ENCODE measurements at regions of chr1 and their contacts with region 1.

Region 1: DNA sequence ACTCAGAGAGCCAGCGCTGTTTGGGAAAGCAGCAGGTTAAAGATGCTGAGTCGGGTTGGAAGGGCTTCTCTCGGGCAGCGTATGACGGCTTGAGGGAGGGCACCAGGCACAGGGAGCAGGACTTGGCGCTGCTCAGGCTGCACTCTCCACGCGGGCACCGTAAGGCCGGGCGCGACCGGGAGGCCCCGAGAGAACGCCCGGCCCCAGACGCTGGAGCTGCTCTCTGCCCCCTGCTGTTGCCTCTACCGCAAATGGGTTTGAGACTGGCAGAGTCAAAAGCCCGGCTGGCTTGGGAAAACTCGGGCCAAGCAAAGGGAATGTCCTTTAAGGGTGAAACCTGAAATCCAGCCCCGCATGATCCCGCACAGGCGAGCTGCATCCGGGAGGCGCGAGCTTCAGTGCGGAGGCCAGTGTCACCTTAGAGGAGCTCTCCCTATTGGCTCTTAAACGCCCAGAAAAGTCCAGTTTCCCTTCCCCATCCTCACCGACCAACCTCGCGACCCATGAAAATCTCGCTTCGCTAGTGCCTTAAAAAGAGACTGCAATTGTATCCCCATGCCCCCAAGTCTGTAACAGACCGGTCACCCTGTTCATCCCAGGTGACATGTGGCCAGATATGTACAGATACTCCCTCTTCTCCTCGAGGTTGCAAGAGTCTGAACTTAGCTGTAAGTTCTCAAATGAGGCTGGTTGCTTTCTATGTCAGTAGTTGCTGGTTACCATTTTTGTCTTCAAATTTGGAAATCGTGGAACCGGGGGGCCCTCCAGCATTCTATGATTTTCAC is 1.1 kb downstream of the PRRX1 start:
- DNase-seq: peak; percentile 80
- H3K4me3 ChIP-seq: peak overlapping the region; percentile 96
- H3K27ac ChIP-seq: peak overlapping the region; percentile 97
- H3K4me1 ChIP-seq: peaks cover 20% of the 10 kb centered on the region
- H3K27me3 ChIP-seq: no peaks in the 10 kb centered on the region

Region 2: GRCh38 chr1:170010443-170010842 is 654.6 kb before region 1 on chr1:
- in situ Hi-C with region 1: loop called (anchors 10 kb)
- DNase-seq: peak; percentile 79
- H3K4me3 ChIP-seq: no peak overlapping the region
- H3K27ac ChIP-seq: no peak overlapping the region
- H3K4me1 ChIP-seq: no peaks in the 10 kb centered on the region
- H3K27me3 ChIP-seq: no peaks in the 10 kb centered on the region

Region 3: GRCh38 chr1:170436928-170437327 is 228.1 kb before region 1 on chr1:
- in situ Hi-C with region 1: no loop called
- DNase-seq: no peak
- H3K4me3 ChIP-seq: no peak overlapping the region
- H3K27ac ChIP-seq: no peak overlapping the region
- H3K4me1 ChIP-seq: no peaks in the 10 kb centered on the region
- H3K27me3 ChIP-seq: no peaks in the 10 kb centered on the region

Region 4: GRCh38 chr1:170531758-170532657 is 133.0 kb before region 1 on chr1 and contains the start of gene GORAB:
- in situ Hi-C with region 1: loop called (anchors 10 kb)
- DNase-seq: peak; percentile 97
- H3K4me3 ChIP-seq: peak within 1 kb of the TSS; percentile 96
- H3K27ac ChIP-seq: peak within 1 kb of the TSS; percentile 100
- H3K4me1 ChIP-seq: peaks cover 19% of the 10 kb centered on the region
- H3K27me3 ChIP-seq: no peaks in the 10 kb centered on the region
- total RNA-seq, gene GORAB: 16.4 and 27.7 TPM in 2 replicates

Region 5: DNA sequence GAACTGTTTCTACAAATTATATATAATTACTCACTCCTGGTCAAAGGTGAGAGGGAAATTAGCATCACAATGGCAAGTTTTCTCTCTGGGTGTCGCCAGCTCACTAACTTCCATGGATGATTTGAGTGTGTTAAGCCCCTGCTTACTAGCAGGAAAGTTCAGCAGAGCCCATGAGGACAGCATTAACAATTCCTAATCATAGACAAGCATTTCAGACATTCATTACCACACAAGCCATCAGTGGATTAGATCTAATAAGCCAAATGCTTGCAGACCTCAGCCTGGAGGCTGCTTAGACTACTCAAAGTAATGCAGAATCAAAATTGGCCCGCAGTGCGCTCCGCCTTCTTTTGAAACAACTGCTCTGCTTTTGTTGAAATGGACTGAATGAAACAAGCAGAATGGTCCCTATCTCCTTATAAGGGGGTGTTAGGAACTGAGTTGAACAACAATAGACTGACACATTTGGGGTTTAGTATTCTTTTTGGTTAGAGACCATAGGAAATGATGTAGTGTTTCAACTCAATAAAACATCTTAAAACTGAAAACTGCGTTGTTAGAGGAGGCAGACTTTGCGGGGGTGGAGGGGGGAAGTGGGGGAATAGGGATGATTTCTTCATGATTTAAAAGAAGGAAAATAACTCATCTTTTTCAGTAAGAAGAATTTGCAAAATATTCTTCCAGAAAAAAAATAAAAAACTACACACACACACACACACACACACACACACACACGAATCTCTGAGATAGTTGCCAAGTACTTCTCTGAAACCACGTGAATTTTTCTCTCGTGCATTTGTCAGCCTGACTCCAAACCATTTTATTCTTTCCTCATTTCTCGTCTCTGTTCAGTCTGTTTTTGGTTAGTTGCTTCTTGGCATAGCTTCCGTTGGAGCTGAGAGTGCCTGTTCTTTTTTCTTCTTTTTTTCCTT is 78.4 kb before region 1 on chr1:
- in situ Hi-C with region 1: loop called (anchors 5 kb)
- DNase-seq: peak; percentile 88
- H3K4me3 ChIP-seq: peak overlapping the region; percentile 76
- H3K27ac ChIP-seq: peak overlapping the region; percentile 92
- H3K4me1 ChIP-seq: peaks cover 54% of the 10 kb centered on the region
- H3K27me3 ChIP-seq: no peaks in the 10 kb centered on the region